Right ventricle myocardium superior (tissue), 1 donor: ENCODE measurements at regions of chr7 and their contacts with region 1.

Region 1: GRCh38 chr7:151304856-151305255 is 36.8 kb upstream of the NUB1 start:
- DNase-seq: no peak
- ATAC-seq: peak; percentile 12

Region 2: GRCh38 chr7:151244196-151244840 is 60.5 kb before region 1 on chr7:
- intact Hi-C with region 1: loop called (anchors 5 kb)
- DNase-seq: no peak
- ATAC-seq: no peak